HCT116 (cell line): ENCODE measurements at regions of chr22 and their contacts with region 1.

Region 1: GRCh38 chr22:39117585-39118191 is 20.6 kb downstream of the APOBEC3H start:
- DNase-seq: peak; percentile 53
- ATAC-seq: peak; percentile 76
- H3K4me3 ChIP-seq: no peak overlapping the region
- H3K27ac ChIP-seq: no peak overlapping the region
- H3K4me1 ChIP-seq: no peaks in the 10 kb centered on the region
- H3K27me3 ChIP-seq: no peaks in the 10 kb centered on the region
- CTCF ChIP-seq: peak; percentile 65 to 80 (median 75)
- POLR2A ChIP-seq: no peak
- RAD21 ChIP-seq: peak; percentile 84

Region 2: GRCh38 chr22:38927033-38927781 is 190.5 kb before region 1 on chr22:
- CTCF ChIA-PET with region 1: no interaction called
- POLR2A ChIA-PET with region 1: no interaction called
- RAD21 ChIA-PET with region 1: no interaction called
- intact Hi-C with region 1: loop called (anchors 5 kb)
- DNase-seq: peak; percentile 74
- ATAC-seq: peak; percentile 75
- H3K4me3 ChIP-seq: peak overlapping the region; percentile 29 to 46
- H3K27ac ChIP-seq: peak overlapping the region; percentile 48
- H3K4me1 ChIP-seq: peaks cover 41 to 53% of the 10 kb centered on the region in 2 experiments
- H3K27me3 ChIP-seq: no peaks in the 10 kb centered on the region
- CTCF ChIP-seq: peak; percentile 77 to 90 (median 85)
- POLR2A ChIP-seq: no peak
- RAD21 ChIP-seq: peak; percentile 66

Region 3: DNA sequence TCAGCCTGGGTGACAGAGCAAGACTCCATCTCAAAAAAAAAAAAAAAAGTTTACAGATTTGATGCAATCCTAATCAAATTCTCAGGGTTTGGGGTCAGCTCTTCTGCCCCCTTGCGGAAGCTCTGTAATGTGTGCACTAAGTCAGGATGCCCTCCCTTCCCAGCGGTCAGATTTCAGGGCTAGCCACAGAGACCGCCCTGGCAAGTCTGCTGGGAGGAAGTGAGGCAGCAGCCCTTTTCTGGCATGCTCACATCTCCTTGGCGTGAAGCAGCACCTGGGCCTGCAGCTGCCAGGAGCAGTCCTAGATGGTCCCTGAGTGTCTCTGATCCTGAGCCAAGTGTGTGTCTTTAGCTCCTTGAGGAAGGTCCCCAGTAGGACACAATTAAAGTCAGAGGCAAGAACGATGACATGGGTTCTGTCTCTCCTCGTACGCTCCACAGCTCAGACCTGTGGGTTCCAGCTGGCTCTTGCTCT is 114.5 kb before region 1 on chr22:
- CTCF ChIA-PET with region 1: interaction called, 7 read pairs
- POLR2A ChIA-PET with region 1: no interaction called
- RAD21 ChIA-PET with region 1: no interaction called
- intact Hi-C with region 1: loop called (anchors 1 kb)
- DNase-seq: peak; percentile 80
- ATAC-seq: peak; percentile 97
- H3K4me3 ChIP-seq: no peak overlapping the region
- H3K27ac ChIP-seq: peak overlapping the region; percentile 3; the same call in 1 of the 2 replicates
- H3K4me1 ChIP-seq: peaks cover 7 to 13% of the 10 kb centered on the region in 2 experiments; a peak in 3 of 4 replicates
- H3K27me3 ChIP-seq: no peaks in the 10 kb centered on the region
- CTCF ChIP-seq: peak; percentile 72 to 92 (median 75)
- POLR2A ChIP-seq: no peak
- RAD21 ChIP-seq: peak; percentile 86

Region 4: DNA sequence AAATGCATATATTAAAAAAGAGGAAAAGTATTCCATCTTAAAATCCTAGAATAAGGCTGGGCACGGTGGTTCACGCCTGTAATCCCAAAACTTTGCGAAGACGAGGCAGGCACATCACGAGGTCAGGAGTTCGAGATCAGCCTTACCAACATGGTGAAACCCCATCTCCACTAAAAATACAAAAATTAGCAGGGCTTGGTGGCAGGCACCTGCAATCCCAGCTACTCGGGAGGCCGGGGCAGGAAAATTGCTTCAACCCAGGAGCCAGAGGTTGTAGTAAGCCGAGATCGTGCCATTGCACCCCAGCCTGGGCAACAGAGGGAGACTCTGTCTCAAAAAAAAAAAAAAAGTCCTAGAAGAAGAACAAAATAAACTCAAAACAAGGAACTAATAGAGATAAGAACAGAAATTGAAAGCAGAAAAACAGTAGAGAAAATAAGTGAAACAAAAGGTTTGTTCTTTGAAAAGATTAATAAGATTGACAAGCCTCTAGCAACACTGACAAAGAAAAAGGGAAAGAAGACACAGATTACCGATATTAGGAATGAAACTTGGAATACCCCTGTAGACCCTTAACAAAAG is 79.8 kb after region 1 on chr22:
- CTCF ChIA-PET with region 1: no interaction called
- POLR2A ChIA-PET with region 1: no interaction called
- RAD21 ChIA-PET with region 1: no interaction called
- intact Hi-C with region 1: no loop called
- DNase-seq: no peak
- ATAC-seq: no peak
- H3K4me3 ChIP-seq: no peak overlapping the region
- H3K27ac ChIP-seq: no peak overlapping the region
- H3K4me1 ChIP-seq: peaks cover under 1% of the 10 kb centered on the region in 2 experiments; a peak in 1 of 4 replicates
- H3K27me3 ChIP-seq: no peaks in the 10 kb centered on the region
- CTCF ChIP-seq: no peak
- POLR2A ChIP-seq: no peak
- RAD21 ChIP-seq: no peak